A549 (cell line): ENCODE measurements at regions of chr19 and their contacts with region 1.

Region 1: GRCh38 chr19:38653028-38653571 is 5.7 kb downstream of the ACTN4 start:
- DNase-seq: peak in 1 of 2 experiments; percentile 82
- ATAC-seq: peak in 1 of 2 experiments; percentile 6; a peak in 2 of 6 replicates
- H3K4me3 ChIP-seq: peak overlapping the region; percentile 85; the same call in 2 of the 3 replicates
- H3K27ac ChIP-seq: peak overlapping the region; percentile 87 to 91
- H3K4me1 ChIP-seq: peaks cover 78% of the 10 kb centered on the region
- CTCF ChIP-seq: no peak
- EP300 ChIP-seq: no peak
- POLR2A ChIP-seq: no peak
- RAD21 ChIP-seq: 0 out of 5 replicates have a peak, but pooled peaks of 1 of the 2 experiments have one; percentile 7

Region 2: DNA sequence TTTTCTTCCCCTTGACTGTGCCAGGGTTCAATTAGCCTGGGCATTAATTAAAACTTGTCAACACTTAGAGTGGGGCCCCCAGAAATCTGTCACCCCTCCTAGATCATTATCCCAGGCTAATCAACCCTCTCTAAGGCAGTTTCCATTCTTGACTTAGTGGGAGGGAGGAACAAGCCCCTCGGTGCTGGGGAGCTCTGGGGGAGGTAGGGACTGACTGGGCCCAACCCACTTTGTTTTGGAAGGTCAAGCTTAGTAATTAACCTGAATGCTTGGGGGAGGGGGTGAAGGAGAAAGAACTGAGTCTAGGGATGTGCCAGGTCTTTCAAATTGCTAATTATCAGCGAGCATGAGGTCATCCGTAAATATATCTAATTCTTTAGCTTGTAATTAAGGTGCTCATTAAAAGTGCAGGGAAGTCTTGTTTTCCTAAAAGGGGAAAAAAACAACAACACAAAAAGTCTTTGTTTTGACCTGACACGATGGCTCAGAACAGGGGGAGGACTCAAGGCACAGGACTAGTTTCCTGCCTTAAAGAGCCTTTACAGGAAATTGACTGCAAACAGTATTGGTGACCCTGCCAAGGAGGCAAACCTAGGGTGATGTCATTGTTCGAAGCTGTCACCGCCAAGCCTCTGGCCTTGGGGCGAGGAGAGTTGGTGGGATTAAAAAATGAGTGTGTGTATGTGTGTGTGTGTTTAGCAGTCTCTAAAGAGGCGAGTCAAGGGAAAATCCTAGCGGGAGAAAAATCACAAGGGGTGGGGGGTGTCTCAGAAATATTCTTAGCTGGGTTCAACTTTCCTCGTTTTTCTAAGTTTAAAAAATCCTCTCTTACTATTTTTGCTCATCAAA is 13.8 kb after region 1 on chr19:
- CTCF ChIA-PET with region 1: interaction called, 336 read pairs
- POLR2A ChIA-PET with region 1: interaction called, 30 read pairs
- DNase-seq: peak in 1 of 2 experiments; percentile 87
- ATAC-seq: peak; percentile 19 to 30; a peak in 4 of 6 replicates
- H3K4me3 ChIP-seq: peak overlapping the region; percentile 13; the same call in 2 of the 3 replicates
- H3K27ac ChIP-seq: peak overlapping the region; percentile 75 to 91
- H3K4me1 ChIP-seq: peaks cover 100% of the 10 kb centered on the region
- CTCF ChIP-seq: no peak
- EP300 ChIP-seq: no peak
- POLR2A ChIP-seq: no peak
- RAD21 ChIP-seq: no peak

Region 3: GRCh38 chr19:38769635-38770211 is 116.6 kb after region 1 on chr19:
- CTCF ChIA-PET with region 1: no interaction called
- POLR2A ChIA-PET with region 1: no interaction called
- DNase-seq: peak; percentile 77 to 85
- ATAC-seq: peak; percentile 67 to 89
- H3K4me3 ChIP-seq: no peak overlapping the region
- H3K27ac ChIP-seq: peak overlapping the region; percentile 28 to 62; a peak in 4 of 6 replicates
- H3K4me1 ChIP-seq: no peaks in the 10 kb centered on the region; the same call in 2 of the 3 replicates
- CTCF ChIP-seq: peak; percentile 61
- EP300 ChIP-seq: no peak
- POLR2A ChIP-seq: no peak; the same call in 1 of the 2 replicates
- RAD21 ChIP-seq: peak; percentile 64 to 71